Activated CD8-positive, alpha-beta T cell treated with anti-CD3 and anti-CD28 coated beads, Interleukin-2, amount 10 ng/mL, durations not matched to agents 7 days and 5 days (primary cell): ENCODE measurements at regions of chr3 and their contacts with region 1.

Region 1: GRCh38 chr3:39180546-39181346 is 11.6 kb downstream of the XIRP1 start:
- DNase-seq: peak; percentile 93
- ATAC-seq: peak; percentile 89
- H3K4me3 Mint-ChIP-seq: peak overlapping the region; percentile 75
- H3K27ac Mint-ChIP-seq: peak overlapping the region; percentile 75
- H3K4me1 Mint-ChIP-seq: peaks cover 49% of the 10 kb centered on the region
- H3K27me3 Mint-ChIP-seq: no peaks in the 10 kb centered on the region

Region 2: DNA sequence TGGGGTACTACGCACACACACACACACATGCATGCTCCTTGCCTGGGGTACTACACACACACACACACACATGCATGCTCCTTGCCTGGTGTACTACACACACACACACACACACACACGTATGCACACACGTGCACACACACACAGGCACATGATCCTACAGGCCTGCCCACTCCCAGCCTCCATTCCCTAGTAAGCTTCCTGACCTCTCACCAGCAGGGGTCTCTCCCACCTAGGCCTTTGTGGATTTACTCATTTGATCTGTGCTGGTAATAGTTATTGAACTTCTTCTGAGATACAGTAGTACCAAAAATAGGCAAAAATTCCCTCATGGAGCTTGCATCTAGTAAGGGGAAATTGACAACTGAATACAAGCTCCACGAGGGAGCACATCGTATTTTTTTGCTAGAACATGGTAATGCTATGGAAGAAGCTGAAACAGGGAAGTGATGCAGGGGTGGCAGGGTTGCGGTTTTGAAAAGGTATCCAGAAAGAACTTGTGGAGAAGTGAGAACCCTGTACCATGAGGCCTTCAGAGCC is 54.1 kb before region 1 on chr3:
- CTCF ChIA-PET with region 1: interaction called, 15 read pairs
- POLR2A ChIA-PET with region 1: interaction called, 4 read pairs
- DNase-seq: peak; percentile 52
- ATAC-seq: peak; percentile 41
- H3K4me3 Mint-ChIP-seq: no peak overlapping the region
- H3K27ac Mint-ChIP-seq: no peak overlapping the region
- H3K4me1 Mint-ChIP-seq: peaks cover 28% of the 10 kb centered on the region
- H3K27me3 Mint-ChIP-seq: peaks cover 21% of the 10 kb centered on the region